ENCODE measurements at regions of chr3 and their contacts with region 1.

Region 1: DNA sequence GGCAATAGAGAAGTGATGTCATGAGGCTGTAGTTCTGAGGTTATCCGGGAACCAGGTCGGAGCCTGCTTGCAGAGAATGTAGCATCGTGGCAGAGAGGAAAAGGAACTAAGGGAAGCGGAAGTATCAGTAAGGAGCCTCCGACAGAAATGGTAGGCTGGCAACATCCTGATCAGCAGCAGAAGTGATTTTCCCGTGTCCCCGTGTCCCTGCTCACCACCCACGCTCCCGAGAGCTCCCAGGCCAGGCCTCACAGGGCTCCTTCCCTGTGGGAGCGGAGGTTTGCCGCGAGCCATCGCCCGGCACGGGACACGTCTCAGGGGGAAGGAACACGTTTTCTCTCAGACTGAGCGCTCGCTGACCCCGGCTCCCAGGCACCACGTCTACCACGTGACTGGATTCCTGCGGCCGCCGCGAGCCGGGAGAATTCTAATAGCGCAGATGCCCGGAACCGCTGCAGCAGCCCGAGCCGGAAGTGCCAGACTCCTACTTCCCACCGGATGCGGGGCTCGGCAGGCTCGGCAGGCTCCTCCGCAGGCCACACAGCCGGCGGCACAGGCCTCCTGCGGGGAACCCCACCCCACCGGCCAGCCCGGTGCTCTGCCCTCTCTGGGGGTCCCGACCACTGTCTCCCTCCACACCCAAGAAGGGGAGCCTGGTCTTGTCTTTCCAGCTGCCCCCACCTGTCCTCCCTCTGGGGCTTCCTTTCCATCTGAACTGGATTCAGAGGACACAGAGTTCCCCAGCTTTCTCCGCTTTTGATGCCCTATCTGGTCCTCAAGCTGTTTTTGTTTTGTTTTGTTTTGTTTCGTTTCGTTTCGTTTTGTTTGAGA is 99.3 kb downstream of the BDH1 start:
- DNase-seq: peak; percentile 27 to 94
- H3K4me3 ChIP-seq: peak overlapping the region; percentile 55 to 60
- H3K27ac ChIP-seq: peak overlapping the region; percentile 50 to 80
- H3K4me1 ChIP-seq: peaks cover 0 to 8% of the 10 kb centered on the region in 2 donors
- H3K27me3 ChIP-seq: no peaks in the 10 kb centered on the region
- CTCF ChIP-seq: no peak

Region 2: DNA sequence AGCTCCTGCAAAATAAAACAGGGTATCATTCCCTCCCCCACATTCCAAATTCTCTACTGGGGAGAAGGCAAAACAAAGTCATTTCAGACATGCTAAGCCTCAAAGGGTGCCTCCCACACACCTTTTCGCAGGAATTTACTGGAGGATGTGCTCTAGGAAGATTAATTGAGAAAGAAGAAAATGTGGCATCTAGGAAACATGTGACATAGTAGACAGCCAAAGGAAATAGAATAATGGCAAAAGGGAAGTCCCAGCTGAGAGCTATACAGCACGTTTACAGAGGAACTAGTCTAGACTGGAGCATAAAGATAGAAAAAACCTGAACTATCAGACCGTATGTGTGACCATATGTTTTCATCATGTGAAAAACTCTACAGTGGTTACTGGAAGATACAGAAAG is 368.1 kb before region 1 on chr3:
- intact Hi-C with region 1: no loop called
- DNase-seq: no peak
- H3K4me3 ChIP-seq: no peak overlapping the region
- H3K27ac ChIP-seq: no peak overlapping the region
- H3K4me1 ChIP-seq: no peaks in the 10 kb centered on the region
- H3K27me3 ChIP-seq: no peaks in the 10 kb centered on the region
- CTCF ChIP-seq: no peak

Region 3: DNA sequence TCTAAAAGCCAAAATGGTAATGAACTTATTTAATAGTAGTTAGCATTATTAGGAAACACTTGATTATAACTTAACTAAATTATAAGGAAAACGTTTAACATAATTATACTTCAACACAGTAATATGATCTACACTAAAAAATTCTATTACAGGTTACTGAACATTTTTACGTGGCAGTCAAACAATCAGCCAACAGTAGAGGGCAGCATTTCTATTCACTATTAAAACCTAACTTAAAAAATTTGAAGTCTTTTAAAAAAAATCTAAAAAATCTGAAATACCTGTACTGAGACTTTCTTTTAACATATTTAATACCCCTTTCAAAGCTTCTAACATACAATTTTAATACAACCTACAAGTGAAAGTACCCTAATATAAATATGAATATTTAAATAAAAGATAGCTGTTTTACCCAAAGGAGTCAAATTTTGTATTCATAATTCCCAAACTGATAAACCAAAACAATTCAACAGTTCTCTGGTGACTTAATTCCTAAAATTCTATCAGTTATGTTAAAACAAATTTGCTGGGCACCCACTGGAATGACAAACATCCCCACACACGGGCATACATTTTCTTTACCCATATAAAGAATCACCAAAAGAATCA is 199.5 kb before region 1 on chr3:
- intact Hi-C with region 1: loop called (anchors 2 kb)
- DNase-seq: no peak
- H3K4me3 ChIP-seq: no peak overlapping the region
- H3K27ac ChIP-seq: no peak overlapping the region
- H3K4me1 ChIP-seq: no peaks in the 10 kb centered on the region
- H3K27me3 ChIP-seq: no peaks in the 10 kb centered on the region
- CTCF ChIP-seq: peak; percentile 42 to 70 (median 68)

Region 4: GRCh38 chr3:197298341-197298857 is 158.1 kb before region 1 on chr3 and contains the start of gene DLG1:
- intact Hi-C with region 1: loop called (anchors 1 kb)
- DNase-seq: peak; percentile 38 to 93
- H3K4me3 ChIP-seq: peak within 1 kb of the TSS; percentile 87 to 98
- H3K27ac ChIP-seq: peak within 1 kb of the TSS; percentile 89 to 91
- H3K4me1 ChIP-seq: peaks cover 0 to 14% of the 10 kb centered on the region in 2 donors
- H3K27me3 ChIP-seq: no peaks in the 10 kb centered on the region
- CTCF ChIP-seq: no peak
- total RNA-seq, gene DLG1: 31.0 TPM

Region 5: GRCh38 chr3:197354319-197355001 is 102.0 kb before region 1 on chr3:
- intact Hi-C with region 1: loop called (anchors 10 kb)
- DNase-seq: no peak
- H3K4me3 ChIP-seq: no peak overlapping the region
- H3K27ac ChIP-seq: no peak overlapping the region
- H3K4me1 ChIP-seq: peaks cover 0 to 4% of the 10 kb centered on the region in 2 donors
- H3K27me3 ChIP-seq: no peaks in the 10 kb centered on the region
- CTCF ChIP-seq: no peak

Region 6: DNA sequence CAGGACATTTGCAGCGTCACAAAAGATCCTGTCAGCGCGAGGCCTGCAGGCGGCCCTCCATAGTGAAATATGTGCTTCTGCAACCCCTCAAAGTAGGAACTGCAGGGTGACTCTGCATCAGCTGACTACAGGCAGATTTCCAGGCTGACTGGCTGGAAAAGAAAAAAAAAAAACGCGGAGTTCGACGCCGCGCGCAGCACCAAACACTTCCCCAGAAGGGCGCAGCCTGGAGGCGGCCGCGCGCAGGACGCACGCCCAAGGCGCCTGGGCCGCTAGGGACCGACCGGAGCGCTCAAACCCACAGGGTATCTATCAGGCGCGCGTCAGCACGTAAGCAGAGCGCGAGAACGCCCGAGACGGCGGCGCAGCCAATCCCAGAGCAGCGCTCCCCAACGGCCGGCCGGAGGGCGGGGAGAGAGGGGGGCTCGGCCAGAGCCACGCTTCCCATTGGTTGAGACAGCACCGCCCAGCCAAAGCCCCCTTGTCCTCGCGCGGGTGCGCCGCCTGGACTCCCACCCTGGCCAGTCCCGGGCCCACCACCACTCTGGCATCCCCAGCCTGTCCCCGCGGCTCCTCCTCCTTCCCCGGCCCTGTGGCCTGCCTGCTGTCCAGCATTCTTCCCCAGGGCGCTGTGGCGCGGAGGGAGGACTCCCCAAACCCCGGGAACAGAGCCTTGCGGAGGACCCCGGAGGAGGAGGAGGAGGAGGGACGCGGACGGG is 98.2 kb after region 1 on chr3:
- intact Hi-C with region 1: loop called (anchors 5 kb)
- DNase-seq: peak; percentile 75 to 97
- H3K4me3 ChIP-seq: peak overlapping the region; percentile 69 to 80
- H3K27ac ChIP-seq: peak overlapping the region; percentile 82 to 93
- H3K4me1 ChIP-seq: peaks cover 0 to 12% of the 10 kb centered on the region in 2 donors
- H3K27me3 ChIP-seq: no peaks in the 10 kb centered on the region
- CTCF ChIP-seq: peak; percentile 41 to 60 (median 47)